Ascending aorta (tissue), 2 donors: ENCODE measurements at regions of chr3 and their contacts with region 1.

Region 1: DNA sequence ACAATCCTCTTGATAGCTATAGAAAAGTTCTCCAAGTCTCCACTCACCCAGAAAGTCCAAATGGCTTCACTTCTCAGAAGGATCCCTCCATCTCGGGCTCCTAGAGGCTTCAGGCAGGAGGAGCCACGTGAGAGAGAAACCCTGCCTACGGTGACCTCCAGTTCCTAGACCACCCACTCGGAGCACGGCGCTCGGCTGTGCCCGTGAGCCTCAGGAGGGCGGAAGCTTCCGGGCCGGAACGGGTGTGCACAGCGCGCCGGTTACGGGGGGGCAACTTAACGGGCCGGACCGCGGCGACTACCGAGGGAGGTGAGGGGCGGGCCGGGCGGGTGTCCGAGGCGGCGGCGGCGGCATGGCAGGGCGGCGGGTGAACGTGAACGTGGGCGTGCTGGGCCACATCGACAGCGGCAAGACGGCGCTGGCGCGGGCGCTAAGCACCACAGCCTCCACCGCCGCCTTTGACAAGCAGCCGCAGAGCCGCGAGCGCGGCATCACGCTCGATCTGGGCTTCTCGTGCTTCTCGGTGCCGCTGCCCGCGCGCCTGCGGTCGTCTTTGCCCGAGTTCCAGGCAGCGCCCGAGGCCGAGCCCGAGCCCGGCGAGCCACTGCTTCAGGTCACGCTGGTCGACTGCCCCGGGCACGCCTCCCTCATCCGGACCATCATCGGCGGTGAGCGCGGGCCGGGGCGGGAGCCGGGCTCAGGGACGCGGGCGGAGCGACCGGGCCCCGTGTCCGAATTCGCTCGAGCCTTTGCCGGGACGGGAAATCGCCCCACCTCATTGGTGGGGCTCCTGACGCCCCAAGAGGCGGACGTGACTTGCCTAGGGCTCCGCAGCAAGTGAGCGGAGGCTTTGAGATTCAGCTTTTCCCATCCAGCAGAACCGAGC is at the start of gene EEFSEC:
- DNase-seq: peak; percentile 27 to 90
- H3K4me3 ChIP-seq: peak within 1 kb of the TSS; percentile 81 to 84
- H3K27ac ChIP-seq: peak within 1 kb of the TSS; percentile 82 to 85
- H3K4me1 ChIP-seq: peaks cover 6 to 10% of the 10 kb centered on the region in 2 donors
- H3K27me3 ChIP-seq: no peaks in the 10 kb centered on the region
- CTCF ChIP-seq: no peak
- total RNA-seq, gene EEFSEC: 16.2 TPM

Region 2: DNA sequence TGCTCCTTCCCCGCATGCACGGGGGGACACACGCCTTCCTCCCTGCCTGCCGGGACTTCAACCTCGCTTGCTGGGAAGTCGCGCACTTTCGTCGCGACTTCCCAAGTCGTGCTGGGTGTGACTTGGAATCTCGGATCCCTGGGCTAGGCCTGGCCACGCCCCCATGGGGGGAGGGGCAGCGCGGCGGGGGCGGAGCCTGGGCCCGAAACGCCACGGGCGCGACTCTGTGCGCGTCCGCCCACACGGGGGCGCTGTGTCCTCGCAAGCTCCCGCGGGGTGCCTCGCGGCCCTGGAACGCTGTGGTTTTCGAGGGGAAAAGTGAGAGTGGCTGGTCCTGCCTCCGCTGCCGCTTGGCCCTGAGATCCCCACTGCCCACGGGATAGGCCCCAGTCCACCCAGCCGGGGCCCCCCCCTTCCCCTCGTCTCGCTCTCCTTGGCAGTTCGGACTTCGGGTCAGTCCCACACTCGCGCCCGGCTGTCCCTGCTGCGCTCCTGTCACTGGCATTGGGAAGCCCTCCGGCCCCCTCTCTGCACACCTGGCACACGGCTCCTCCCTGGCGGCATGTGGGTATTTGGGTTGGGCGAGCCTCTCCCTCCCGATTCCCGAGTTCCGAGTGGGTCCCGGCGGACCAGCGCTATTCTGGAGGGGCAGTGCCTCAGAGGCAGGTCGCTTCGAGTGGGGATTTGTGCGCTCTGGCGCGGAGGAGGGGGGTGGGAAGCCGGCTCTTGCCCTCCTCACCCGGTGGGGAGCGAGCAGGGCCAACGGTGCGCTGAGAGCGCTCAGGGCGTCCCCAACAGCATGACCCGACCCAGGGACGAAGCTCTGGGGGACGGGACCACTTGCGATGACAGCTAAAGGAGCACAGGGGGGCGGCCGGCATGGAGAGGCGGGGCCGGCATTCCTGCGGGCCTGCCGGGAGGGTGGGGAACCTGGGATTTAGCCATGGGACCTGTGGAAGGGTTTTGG is 77.6 kb before region 1 on chr3:
- intact Hi-C with region 1: loop called (anchors 2 kb)
- DNase-seq: peak in 1 of 2 donors; percentile 91
- H3K4me3 ChIP-seq: peak overlapping the region; percentile 57 to 71
- H3K27ac ChIP-seq: peak overlapping the region; percentile 9 to 53
- H3K4me1 ChIP-seq: peaks cover 0 to 15% of the 10 kb centered on the region in 2 donors
- H3K27me3 ChIP-seq: no peaks in the 10 kb centered on the region
- CTCF ChIP-seq: peak; percentile 91 to 97 (median 96)

Region 3: GRCh38 chr3:128123538-128124368 is 29.6 kb before region 1 on chr3 and contains the start of gene RUVBL1:
- intact Hi-C with region 1: loop called (anchors 1 kb)
- DNase-seq: peak; percentile 89 to 99
- H3K4me3 ChIP-seq: peak within 1 kb of the TSS; percentile 82 to 87
- H3K27ac ChIP-seq: peak within 1 kb of the TSS; percentile 66 to 75
- H3K4me1 ChIP-seq: peaks cover 0 to 8% of the 10 kb centered on the region in 2 donors
- H3K27me3 ChIP-seq: no peaks in the 10 kb centered on the region
- CTCF ChIP-seq: no peak
- total RNA-seq, gene RUVBL1: 10.3 TPM

Region 4: DNA sequence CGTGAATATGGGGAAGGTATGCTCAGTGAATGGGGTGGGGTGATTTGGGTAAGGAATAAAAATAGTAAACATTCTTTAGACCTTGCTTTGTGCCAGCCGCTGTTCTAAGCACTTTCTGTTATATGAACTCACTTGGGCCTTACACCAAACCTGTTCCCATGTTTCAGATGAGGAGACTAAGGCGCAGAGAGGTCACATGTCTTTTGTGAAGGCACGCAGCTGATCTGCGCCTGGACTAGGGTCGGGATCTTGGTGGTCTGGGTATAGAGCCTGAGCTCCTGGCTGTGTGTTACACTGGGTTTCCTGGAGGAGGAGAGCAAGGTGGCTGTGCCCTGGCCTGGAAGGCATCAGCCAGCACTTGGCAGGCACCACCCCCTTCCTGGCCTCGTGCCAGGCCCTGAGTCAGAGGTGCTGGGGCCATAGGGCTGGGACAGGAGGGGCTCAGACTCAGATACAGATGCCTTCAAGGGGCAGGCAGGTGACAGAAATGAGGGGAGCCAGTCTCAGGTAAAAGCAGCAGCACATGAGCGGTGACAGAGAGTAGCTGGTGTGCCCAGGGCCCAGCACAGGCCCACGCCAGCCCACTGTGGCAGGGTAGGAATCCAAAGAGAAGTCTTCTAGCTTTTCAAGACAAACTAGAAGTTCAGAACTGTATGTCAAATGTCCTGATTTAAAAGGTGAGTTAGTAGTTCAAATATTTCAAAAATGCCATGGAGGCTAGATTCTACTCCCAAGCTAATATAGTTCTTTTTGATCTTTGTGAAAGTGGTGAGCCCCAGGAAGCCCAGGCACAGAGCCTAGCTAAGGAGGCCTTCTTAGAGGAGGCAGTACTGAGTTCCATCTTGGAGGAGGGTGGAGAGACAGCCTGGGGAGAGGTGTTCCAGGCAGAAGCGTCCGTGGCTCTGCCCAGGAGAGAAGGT is 230.2 kb after region 1 on chr3:
- intact Hi-C with region 1: loop called (anchors 5 kb)
- DNase-seq: peak; percentile 53 to 86
- H3K4me3 ChIP-seq: no peak overlapping the region
- H3K27ac ChIP-seq: peak overlapping the region; percentile 79 to 83
- H3K4me1 ChIP-seq: peaks cover 16 to 47% of the 10 kb centered on the region in 2 donors
- H3K27me3 ChIP-seq: no peaks in the 10 kb centered on the region
- CTCF ChIP-seq: no peak